WTC11 (cell line): ENCODE measurements at regions of chr20 and their contacts with region 1.

Region 1: DNA sequence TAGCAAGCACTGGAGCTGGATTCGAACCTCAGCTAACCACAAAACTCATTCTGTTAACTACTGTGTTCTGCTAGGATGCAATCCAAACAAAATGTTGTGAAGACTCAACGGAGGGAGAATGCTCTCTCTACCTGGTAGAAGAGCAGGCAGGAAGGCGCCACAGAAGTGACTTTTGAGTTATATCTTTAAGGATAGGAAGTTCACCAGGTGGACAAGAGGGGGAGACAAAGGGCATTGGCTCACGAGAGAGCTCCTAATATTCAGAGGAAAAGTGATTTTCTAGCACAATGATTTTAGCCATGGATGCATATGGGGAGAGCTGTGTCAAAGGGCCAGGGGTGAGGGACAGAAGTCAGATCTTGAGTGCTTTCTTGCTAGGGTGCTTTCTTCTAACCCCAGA is 108.4 kb upstream of the MAFB start:
- DNase-seq: no peak
- ATAC-seq: peak; percentile 81
- H3K4me3 Mint-ChIP-seq: no peak overlapping the region
- H3K27ac Mint-ChIP-seq: no peak overlapping the region
- H3K4me1 Mint-ChIP-seq: no peaks in the 10 kb centered on the region
- H3K27me3 Mint-ChIP-seq: no peaks in the 10 kb centered on the region
- CTCF ChIP-seq: peak; percentile 30; the same call in 1 of the 2 replicates

Region 2: GRCh38 chr20:40673426-40673825 is 124.0 kb before region 1 on chr20:
- CTCF ChIA-PET with region 1: no interaction called
- POLR2A ChIA-PET with region 1: no interaction called
- DNase-seq: no peak
- ATAC-seq: peak; percentile 60
- H3K4me3 Mint-ChIP-seq: no peak overlapping the region
- H3K27ac Mint-ChIP-seq: no peak overlapping the region
- H3K4me1 Mint-ChIP-seq: peaks cover 16% of the 10 kb centered on the region
- H3K27me3 Mint-ChIP-seq: peaks cover 14% of the 10 kb centered on the region
- CTCF ChIP-seq: no peak

Region 3: DNA sequence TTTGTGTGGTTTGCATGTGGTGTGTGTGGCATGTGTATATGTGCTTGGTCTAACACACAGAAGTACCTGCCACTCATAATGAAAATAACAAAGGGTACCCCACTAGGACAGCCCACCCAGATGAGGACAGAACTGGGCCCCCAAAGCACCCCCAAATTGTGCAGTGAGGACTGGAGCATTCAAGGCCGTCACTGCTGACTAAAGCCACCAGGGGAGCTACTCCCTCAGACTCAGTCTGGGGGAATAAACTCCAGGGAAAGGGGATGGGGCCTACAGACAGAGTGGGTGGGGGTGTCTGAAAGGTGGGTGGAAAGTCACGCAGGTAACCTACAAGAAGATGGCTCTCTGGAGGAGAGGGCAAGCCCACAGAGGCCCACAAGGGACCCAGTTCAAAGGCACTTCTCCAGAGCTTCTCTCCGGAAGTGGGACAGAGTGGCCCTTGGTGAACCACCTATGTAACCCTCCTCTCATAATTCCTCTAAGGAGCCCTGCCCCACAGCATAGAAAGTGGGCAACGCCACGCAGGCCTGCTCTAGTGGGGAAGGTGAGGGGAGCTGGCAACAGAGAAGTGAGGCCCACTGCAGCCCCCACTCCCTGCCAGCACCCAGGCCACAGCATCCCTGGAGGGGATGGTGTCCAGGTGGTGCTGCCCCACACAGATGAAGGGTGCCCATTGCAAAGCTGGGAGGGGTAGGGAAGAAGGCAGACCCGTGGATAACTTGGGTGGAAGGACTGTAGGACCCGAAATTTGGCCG is 14.4 kb after region 1 on chr20:
- CTCF ChIA-PET with region 1: interaction called, 14 read pairs
- POLR2A ChIA-PET with region 1: no interaction called
- DNase-seq: no peak
- ATAC-seq: peak; percentile 38; the same call in 1 of the 2 replicates
- H3K4me3 Mint-ChIP-seq: no peak overlapping the region
- H3K27ac Mint-ChIP-seq: no peak overlapping the region
- H3K4me1 Mint-ChIP-seq: no peaks in the 10 kb centered on the region
- H3K27me3 Mint-ChIP-seq: no peaks in the 10 kb centered on the region
- CTCF ChIP-seq: no peak; the same call in 1 of the 2 replicates

Region 4: GRCh38 chr20:40938020-40938419 is 140.6 kb after region 1 on chr20:
- CTCF ChIA-PET with region 1: interaction called, 13 read pairs
- POLR2A ChIA-PET with region 1: no interaction called
- DNase-seq: peak; percentile 56
- ATAC-seq: peak; percentile 94
- H3K4me3 Mint-ChIP-seq: no peak overlapping the region
- H3K27ac Mint-ChIP-seq: no peak overlapping the region
- H3K4me1 Mint-ChIP-seq: no peaks in the 10 kb centered on the region
- H3K27me3 Mint-ChIP-seq: peaks cover 3% of the 10 kb centered on the region; the same call in 1 of the 2 replicates
- CTCF ChIP-seq: no peak

Region 5: GRCh38 chr20:40945754-40946450 is 148.5 kb after region 1 on chr20:
- CTCF ChIA-PET with region 1: interaction called, 28 read pairs
- POLR2A ChIA-PET with region 1: no interaction called
- DNase-seq: peak; percentile 73
- ATAC-seq: peak; percentile 96
- H3K4me3 Mint-ChIP-seq: no peak overlapping the region
- H3K27ac Mint-ChIP-seq: no peak overlapping the region
- H3K4me1 Mint-ChIP-seq: peaks cover 26% of the 10 kb centered on the region
- H3K27me3 Mint-ChIP-seq: peaks cover 6% of the 10 kb centered on the region
- CTCF ChIP-seq: no peak